ENCODE measurements at regions of chr15 and their contacts with region 1.

Region 1: GRCh38 chr15:99169769-99170311 is 65.0 kb downstream of the SYNM start:
- DNase-seq: peak; percentile 97
- H3K4me3 ChIP-seq: no peak overlapping the region
- H3K27ac ChIP-seq: peak overlapping the region; percentile 92 to 97 (median 96)
- H3K4me1 ChIP-seq: peaks cover 0 to 96% (median 84%) of the 10 kb centered on the region in 4 donors
- H3K27me3 ChIP-seq: no peaks in the 10 kb centered on the region
- CTCF ChIP-seq: no peak
- EP300 ChIP-seq: peak; percentile 84 to 100 (median 92)
- POLR2A ChIP-seq: no peak

Region 2: DNA sequence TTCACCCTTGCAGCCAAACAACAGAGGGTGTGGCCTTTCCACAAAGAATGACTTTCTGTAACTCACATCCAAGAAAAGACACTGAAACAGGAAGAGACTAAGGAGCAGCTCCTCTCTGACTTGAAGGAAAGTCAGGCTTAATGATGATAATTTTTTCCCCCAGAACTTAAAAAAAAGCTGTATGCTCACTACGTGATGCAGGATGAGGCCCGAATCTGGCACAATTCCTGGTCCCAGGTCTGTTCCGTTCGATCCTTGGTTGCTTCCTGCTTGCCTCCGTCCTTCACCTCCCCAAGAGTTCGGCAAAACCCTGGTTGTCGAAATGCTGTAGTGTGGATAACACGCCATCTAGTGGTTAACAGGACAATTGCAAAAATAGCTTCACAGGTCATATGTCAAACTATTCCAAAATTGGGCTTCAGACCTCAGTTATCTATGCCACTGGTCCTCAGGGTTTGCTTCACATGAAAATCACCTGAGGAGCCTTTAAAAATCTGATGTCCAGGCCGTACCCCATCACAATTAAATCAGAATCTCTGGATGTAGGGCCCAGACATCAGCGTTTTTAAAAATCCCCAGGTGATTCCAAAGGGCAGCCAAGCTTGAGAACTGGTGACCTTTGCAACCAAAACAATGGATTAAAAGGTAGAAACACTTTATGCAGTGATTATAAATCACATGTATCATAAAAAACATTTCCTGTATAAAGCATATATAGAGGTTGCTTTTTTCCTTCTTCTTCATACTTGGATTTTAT is 93.1 kb before region 1 on chr15:
- intact Hi-C with region 1: no loop called
- DNase-seq: peak; percentile 82
- H3K4me3 ChIP-seq: peak overlapping the region in 3 of 4 donors; percentile 32 to 40 (median 37)
- H3K27ac ChIP-seq: peak overlapping the region; percentile 48 to 61 (median 60)
- H3K4me1 ChIP-seq: no peaks in the 10 kb centered on the region
- H3K27me3 ChIP-seq: no peaks in the 10 kb centered on the region
- CTCF ChIP-seq: peak; percentile 80 to 86 (median 82)
- EP300 ChIP-seq: no peak
- POLR2A ChIP-seq: no peak

Region 3: GRCh38 chr15:99104788-99105513 is 64.9 kb before region 1 on chr15 and contains the start of gene SYNM:
- intact Hi-C with region 1: loop called (anchors 2 kb)
- DNase-seq: peak; percentile 94
- H3K4me3 ChIP-seq: peak within 1 kb of the TSS; percentile 81 to 87 (median 82)
- H3K27ac ChIP-seq: peak within 1 kb of the TSS; percentile 90 to 100 (median 96)
- H3K4me1 ChIP-seq: peaks cover 0 to 24% (median 13%) of the 10 kb centered on the region in 4 donors
- H3K27me3 ChIP-seq: no peaks in the 10 kb centered on the region
- CTCF ChIP-seq: peak; percentile 30 to 90 (median 44)
- EP300 ChIP-seq: no peak
- POLR2A ChIP-seq: peak; percentile 87 to 95
- total RNA-seq, gene SYNM: 731 to 1,357 (median 1,117) TPM

Region 4: DNA sequence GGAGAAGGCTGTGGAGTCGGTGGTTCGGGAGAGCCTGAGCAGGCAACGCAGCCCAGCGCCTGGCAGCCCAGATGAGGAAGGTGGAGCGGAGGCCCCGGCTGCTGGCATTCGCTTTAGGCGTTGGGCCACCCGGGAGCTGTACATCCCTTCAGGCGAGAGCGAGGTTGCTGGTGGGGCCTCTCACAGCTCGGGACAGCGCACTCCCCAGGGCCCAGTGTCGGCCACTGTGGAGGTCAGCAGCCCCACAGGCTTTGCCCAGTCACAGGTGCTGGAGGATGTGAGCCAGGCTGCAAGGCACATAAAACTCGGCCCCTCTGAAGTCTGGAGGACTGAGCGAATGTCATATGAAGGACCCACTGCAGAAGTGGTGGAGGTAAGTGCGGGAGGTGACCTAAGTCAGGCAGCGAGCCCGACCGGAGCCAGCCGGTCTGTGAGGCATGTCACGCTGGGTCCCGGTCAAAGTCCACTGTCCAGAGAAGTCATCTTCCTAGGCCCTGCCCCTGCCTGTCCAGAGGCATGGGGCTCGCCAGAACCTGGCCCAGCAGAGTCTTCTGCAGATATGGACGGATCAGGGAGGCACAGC is 38.3 kb before region 1 on chr15:
- intact Hi-C with region 1: loop called (anchors 5 kb)
- DNase-seq: peak; percentile 67
- H3K4me3 ChIP-seq: no peak overlapping the region
- H3K27ac ChIP-seq: peak overlapping the region; percentile 90 to 100 (median 96)
- H3K4me1 ChIP-seq: peaks cover 0 to 97% (median 94%) of the 10 kb centered on the region in 4 donors
- H3K27me3 ChIP-seq: no peaks in the 10 kb centered on the region
- CTCF ChIP-seq: no peak
- EP300 ChIP-seq: no peak
- POLR2A ChIP-seq: no peak

Region 5: GRCh38 chr15:99224372-99225214 is 54.8 kb after region 1 on chr15:
- intact Hi-C with region 1: no loop called
- DNase-seq: no peak
- H3K4me3 ChIP-seq: no peak overlapping the region
- H3K27ac ChIP-seq: no peak overlapping the region
- H3K4me1 ChIP-seq: no peaks in the 10 kb centered on the region
- H3K27me3 ChIP-seq: no peaks in the 10 kb centered on the region
- CTCF ChIP-seq: no peak
- EP300 ChIP-seq: no peak
- POLR2A ChIP-seq: no peak

Measured in sigmoid colon (tissue), 7 donors.